ENCODE measurements at regions of chr16 and their contacts with region 1.

Region 1: DNA sequence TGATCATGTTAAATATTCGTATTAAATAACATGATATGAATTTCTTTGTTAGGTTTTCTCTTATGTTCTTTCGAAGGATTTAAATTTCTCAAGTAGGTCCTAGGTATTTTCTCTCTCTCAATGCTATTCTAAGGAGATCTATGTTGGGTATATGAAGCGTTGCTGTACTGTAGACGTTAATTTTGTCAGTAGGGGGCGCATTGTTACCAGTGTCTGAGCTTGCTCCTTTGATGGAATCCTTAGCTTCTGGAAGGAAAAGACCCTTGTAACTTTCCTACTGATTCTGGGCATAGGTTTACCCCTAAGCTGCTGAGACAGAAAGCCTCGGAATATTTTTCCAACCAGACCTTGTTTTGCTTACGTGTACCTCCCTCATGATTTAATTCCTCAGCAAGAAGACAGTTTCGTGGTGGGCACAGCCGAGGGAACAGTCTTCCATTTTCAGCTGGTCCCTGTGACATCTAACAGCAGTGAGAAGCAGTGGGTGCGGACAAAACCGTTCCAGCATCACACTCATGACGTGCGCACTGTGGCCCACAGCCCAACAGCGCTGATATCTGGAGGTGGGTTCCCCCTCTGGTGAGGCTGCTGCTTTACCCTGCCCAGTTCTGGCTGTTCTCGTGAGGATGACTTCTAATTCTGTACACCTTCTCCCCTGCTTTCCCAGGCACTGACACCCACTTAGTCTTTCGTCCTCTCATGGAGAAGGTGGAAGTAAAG is 17.9 kb downstream of the UTP4 start:
- DNase-seq: peak; percentile 85
- H3K4me3 ChIP-seq: no peak overlapping the region
- H3K27ac ChIP-seq: no peak overlapping the region
- H3K4me1 ChIP-seq: no peaks in the 10 kb centered on the region
- H3K27me3 ChIP-seq: no peaks in the 10 kb centered on the region
- CTCF ChIP-seq: peak; percentile 59 to 63
- POLR2A ChIP-seq: no peak

Region 2: DNA sequence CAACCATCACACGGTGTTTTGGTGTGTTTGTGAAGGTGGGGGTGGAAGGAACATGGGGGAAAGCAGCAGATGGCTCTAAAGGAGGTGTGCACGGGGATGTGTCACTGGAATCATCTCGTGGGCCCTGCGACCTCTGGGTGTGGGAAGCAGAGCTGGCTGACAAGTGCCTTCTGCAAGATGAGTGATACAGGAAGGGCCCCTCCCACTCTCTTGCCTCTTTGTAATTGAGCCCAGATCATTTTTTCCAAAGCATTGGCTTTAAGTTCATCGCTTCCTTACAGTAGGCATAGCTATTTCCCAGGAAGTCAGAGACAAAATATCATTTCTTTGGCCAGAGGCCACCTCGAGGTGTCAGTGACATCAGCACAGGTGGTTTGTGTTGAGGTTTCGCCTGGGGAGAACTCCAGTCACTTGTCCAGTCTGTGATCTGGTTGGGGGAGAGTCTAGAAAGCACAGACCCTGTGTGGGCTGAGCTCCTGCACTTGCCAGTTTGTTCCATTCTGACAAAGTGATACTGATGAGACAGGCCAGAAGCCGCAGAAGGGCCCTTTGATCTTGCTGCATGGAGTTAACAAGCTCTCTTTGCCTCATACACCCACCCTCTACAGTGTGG is 16.0 kb after region 1 on chr16:
- CTCF ChIA-PET with region 1: interaction called, 49 read pairs
- POLR2A ChIA-PET with region 1: no interaction called
- dilution Hi-C with region 1: no loop called
- intact Hi-C with region 1: no loop called
- DNase-seq: peak; percentile 49
- H3K4me3 ChIP-seq: no peak overlapping the region
- H3K27ac ChIP-seq: peak overlapping the region; percentile 43
- H3K4me1 ChIP-seq: peaks cover 39% of the 10 kb centered on the region
- H3K27me3 ChIP-seq: no peaks in the 10 kb centered on the region
- CTCF ChIP-seq: no peak
- POLR2A ChIP-seq: no peak

Region 3: GRCh38 chr16:69186642-69187445 is 36.5 kb after region 1 on chr16 and contains the start of gene SNTB2:
- CTCF ChIA-PET with region 1: interaction called, 24 read pairs
- POLR2A ChIA-PET with region 1: no interaction called
- dilution Hi-C with region 1: no loop called
- intact Hi-C with region 1: no loop called
- DNase-seq: peak; percentile 87
- H3K4me3 ChIP-seq: peak within 1 kb of the TSS; percentile 82 to 93 (median 90)
- H3K27ac ChIP-seq: peak within 1 kb of the TSS; percentile 18
- H3K4me1 ChIP-seq: peaks cover 33% of the 10 kb centered on the region
- H3K27me3 ChIP-seq: no peaks in the 10 kb centered on the region
- CTCF ChIP-seq: no peak
- POLR2A ChIP-seq: peak; percentile 98
- total RNA-seq, gene SNTB2: 73.7 and 76.2 TPM in 2 replicates

Region 4: GRCh38 chr16:69253870-69254341 is 103.6 kb after region 1 on chr16:
- CTCF ChIA-PET with region 1: interaction called, 13 read pairs
- POLR2A ChIA-PET with region 1: no interaction called
- dilution Hi-C with region 1: no loop called
- intact Hi-C with region 1: no loop called
- DNase-seq: no peak
- H3K4me3 ChIP-seq: no peak overlapping the region
- H3K27ac ChIP-seq: no peak overlapping the region
- H3K4me1 ChIP-seq: no peaks in the 10 kb centered on the region
- H3K27me3 ChIP-seq: no peaks in the 10 kb centered on the region
- CTCF ChIP-seq: no peak
- POLR2A ChIP-seq: no peak

Region 5: GRCh38 chr16:69286941-69287713 is 136.8 kb after region 1 on chr16:
- CTCF ChIA-PET with region 1: interaction called, 119 read pairs
- POLR2A ChIA-PET with region 1: interaction called, 3 read pairs
- dilution Hi-C with region 1: no loop called
- intact Hi-C with region 1: loop called (anchors 1 kb)
- DNase-seq: peak; percentile 84
- H3K4me3 ChIP-seq: no peak overlapping the region
- H3K27ac ChIP-seq: no peak overlapping the region
- H3K4me1 ChIP-seq: peaks cover 8% of the 10 kb centered on the region
- H3K27me3 ChIP-seq: no peaks in the 10 kb centered on the region
- CTCF ChIP-seq: peak; percentile 14 to 22
- POLR2A ChIP-seq: no peak